Activated naive CD8-positive, alpha-beta T cell treated with anti-CD3 and anti-CD28 coated beads, Interleukin-2, amount 10 ng/mL, durations not matched to agents 7 days and 5 days (primary cell): ENCODE measurements at regions of chr19 and their contacts with region 1.

Region 1: GRCh38 chr19:18588611-18589379 is at the start of gene REX1BD:
- DNase-seq: peak; percentile 90
- ATAC-seq: peak; percentile 79
- H3K4me3 Mint-ChIP-seq: peak within 1 kb of the TSS; percentile 93
- H3K27ac Mint-ChIP-seq: peak within 1 kb of the TSS; percentile 97
- H3K4me1 Mint-ChIP-seq: peaks cover 33% of the 10 kb centered on the region
- H3K27me3 Mint-ChIP-seq: peaks cover 4% of the 10 kb centered on the region
- total RNA-seq, gene REX1BD: 105 to 109 TPM

Region 2: GRCh38 chr19:18428787-18429674 is 159.8 kb before region 1 on chr19:
- POLR2A ChIA-PET with region 1: no interaction called
- DNase-seq: peak; percentile 95
- ATAC-seq: peak; percentile 77
- H3K4me3 Mint-ChIP-seq: peak overlapping the region; percentile 73
- H3K27ac Mint-ChIP-seq: peak overlapping the region; percentile 83
- H3K4me1 Mint-ChIP-seq: peaks cover 14% of the 10 kb centered on the region
- H3K27me3 Mint-ChIP-seq: no peaks in the 10 kb centered on the region

Region 3: GRCh38 chr19:18445262-18445948 is 143.4 kb before region 1 on chr19:
- POLR2A ChIA-PET with region 1: no interaction called
- DNase-seq: no peak
- ATAC-seq: no peak
- H3K4me3 Mint-ChIP-seq: no peak overlapping the region
- H3K27ac Mint-ChIP-seq: no peak overlapping the region
- H3K4me1 Mint-ChIP-seq: peaks cover 8% of the 10 kb centered on the region
- H3K27me3 Mint-ChIP-seq: no peaks in the 10 kb centered on the region

Region 4: GRCh38 chr19:18542936-18543815 is 45.6 kb before region 1 on chr19 and contains the start of gene FKBP8:
- POLR2A ChIA-PET with region 1: interaction called, 30 read pairs
- DNase-seq: peak; percentile 96
- ATAC-seq: peak; percentile 92
- H3K4me3 Mint-ChIP-seq: peak within 1 kb of the TSS; percentile 95
- H3K27ac Mint-ChIP-seq: peak within 1 kb of the TSS; percentile 99
- H3K4me1 Mint-ChIP-seq: peaks cover 10% of the 10 kb centered on the region
- H3K27me3 Mint-ChIP-seq: no peaks in the 10 kb centered on the region
- total RNA-seq, gene FKBP8: 261 to 275 TPM

Region 5: GRCh38 chr19:18557474-18558201 is 31.2 kb before region 1 on chr19 and contains the start of gene KXD1:
- POLR2A ChIA-PET with region 1: interaction called, 32 read pairs
- DNase-seq: peak; percentile 95
- ATAC-seq: peak; percentile 99
- H3K4me3 Mint-ChIP-seq: peak within 1 kb of the TSS; percentile 93
- H3K27ac Mint-ChIP-seq: peak within 1 kb of the TSS; percentile 89
- H3K4me1 Mint-ChIP-seq: peaks cover 20% of the 10 kb centered on the region
- H3K27me3 Mint-ChIP-seq: no peaks in the 10 kb centered on the region
- total RNA-seq, gene KXD1: 96.7 to 105 TPM

Region 6: GRCh38 chr19:18571564-18572300 is 17.1 kb before region 1 on chr19 and contains the start of gene UBA52:
- POLR2A ChIA-PET with region 1: interaction called, 80 read pairs
- DNase-seq: peak; percentile 100
- ATAC-seq: peak; percentile 93
- H3K4me3 Mint-ChIP-seq: peak within 1 kb of the TSS; percentile 97
- H3K27ac Mint-ChIP-seq: peak within 1 kb of the TSS; percentile 92
- H3K4me1 Mint-ChIP-seq: peaks cover 16% of the 10 kb centered on the region
- H3K27me3 Mint-ChIP-seq: no peaks in the 10 kb centered on the region
- total RNA-seq, gene UBA52: 1,538 to 1,547 TPM

Region 7: DNA sequence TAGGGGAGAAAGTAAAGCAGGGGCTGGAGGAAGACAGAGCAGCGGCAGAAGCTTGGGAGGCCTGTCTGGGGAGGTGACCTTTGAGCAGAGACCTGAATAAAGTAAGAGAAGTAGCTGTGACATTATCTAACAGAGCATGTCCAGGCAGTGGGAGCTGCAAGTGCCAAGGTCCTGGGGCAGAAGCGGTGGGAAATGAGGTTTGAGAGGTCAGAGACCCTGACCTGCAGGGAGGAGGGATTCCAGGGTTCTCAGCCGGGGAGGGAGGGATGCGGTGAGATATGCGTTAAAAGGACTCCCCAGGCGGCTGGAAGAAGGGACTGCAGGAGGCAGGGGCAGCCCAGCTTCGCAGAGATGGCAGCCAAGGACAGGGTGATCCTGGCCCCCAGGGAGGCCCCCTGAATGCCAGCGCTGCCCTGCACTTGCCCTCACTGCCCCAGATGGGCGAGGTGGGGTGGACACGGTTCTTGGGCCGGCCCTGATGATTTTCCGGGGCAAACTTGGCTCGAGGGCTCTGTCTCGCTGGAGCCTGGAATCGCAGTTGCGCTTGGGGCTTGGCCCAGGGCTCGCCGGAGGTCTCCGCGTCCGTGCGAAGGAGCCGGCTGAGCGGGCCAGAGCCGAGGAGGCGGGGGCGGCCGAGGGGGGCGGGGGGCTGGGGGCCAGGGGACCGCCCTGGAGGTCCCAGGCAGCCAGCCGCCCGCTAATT is 14.6 kb after region 1 on chr19:
- POLR2A ChIA-PET with region 1: no interaction called
- DNase-seq: no peak
- ATAC-seq: peak; percentile 58
- H3K4me3 Mint-ChIP-seq: no peak overlapping the region
- H3K27ac Mint-ChIP-seq: no peak overlapping the region
- H3K4me1 Mint-ChIP-seq: peaks cover 4% of the 10 kb centered on the region
- H3K27me3 Mint-ChIP-seq: peaks cover 56% of the 10 kb centered on the region

Region 8: GRCh38 chr19:18831524-18832305 is 242.9 kb after region 1 on chr19 and contains the start of gene UPF1:
- POLR2A ChIA-PET with region 1: interaction called, 16 read pairs
- DNase-seq: peak; percentile 99
- ATAC-seq: peak; percentile 70
- H3K4me3 Mint-ChIP-seq: peak within 1 kb of the TSS; percentile 89
- H3K27ac Mint-ChIP-seq: peak within 1 kb of the TSS; percentile 87
- H3K4me1 Mint-ChIP-seq: peaks cover 31% of the 10 kb centered on the region
- H3K27me3 Mint-ChIP-seq: peaks cover 13% of the 10 kb centered on the region
- total RNA-seq, gene UPF1: 90.4 to 93.2 TPM